Activated CD4-positive, alpha-beta T cell treated with anti-CD3 and anti-CD28 coated beads for 36 hours (primary cell): ENCODE measurements at regions of chr3 and their contacts with region 1.

Region 1: DNA sequence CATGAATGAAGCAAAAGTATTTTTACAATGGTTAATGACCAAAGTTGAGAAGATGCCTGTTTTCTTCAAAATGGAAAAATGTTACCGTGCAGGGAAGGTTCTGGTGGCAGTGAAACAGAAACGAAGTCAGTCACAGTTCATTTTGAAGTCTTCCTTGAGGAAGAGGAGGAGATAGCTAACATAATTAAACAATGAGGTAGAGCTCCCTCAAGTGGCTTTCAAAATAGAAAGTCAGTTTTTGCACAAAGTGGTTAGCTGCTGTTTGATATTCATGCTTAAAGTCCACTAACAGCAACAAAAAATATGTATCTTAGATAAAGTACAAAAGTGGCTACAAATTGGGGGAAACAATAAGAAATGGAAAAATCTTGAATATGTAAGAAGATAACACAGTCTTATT is 87.3 kb downstream of the TFG start:
- DNase-seq: no peak
- ATAC-seq: peak; percentile 44
- H3K4me3 Mint-ChIP-seq: no peak overlapping the region
- H3K27ac Mint-ChIP-seq: no peak overlapping the region
- H3K4me1 Mint-ChIP-seq: peaks cover 5% of the 10 kb centered on the region
- H3K27me3 Mint-ChIP-seq: no peaks in the 10 kb centered on the region

Region 2: GRCh38 chr3:100316641-100317069 is 479.9 kb before region 1 on chr3:
- CTCF ChIA-PET with region 1: interaction called, 3 read pairs
- POLR2A ChIA-PET with region 1: no interaction called
- intact Hi-C with region 1: loop called in 1 of 2 experiments (anchors 2 kb)
- DNase-seq: peak; percentile 42
- ATAC-seq: peak; percentile 75
- H3K4me3 Mint-ChIP-seq: no peak overlapping the region
- H3K27ac Mint-ChIP-seq: no peak overlapping the region
- H3K4me1 Mint-ChIP-seq: peaks cover 9% of the 10 kb centered on the region
- H3K27me3 Mint-ChIP-seq: no peaks in the 10 kb centered on the region

Region 3: GRCh38 chr3:100463002-100463401 is 333.6 kb before region 1 on chr3:
- CTCF ChIA-PET with region 1: interaction called, 6 read pairs
- POLR2A ChIA-PET with region 1: no interaction called
- intact Hi-C with region 1: loop called (anchors 2 to 5 kb)
- DNase-seq: peak; percentile 22
- ATAC-seq: peak; percentile 94
- H3K4me3 Mint-ChIP-seq: no peak overlapping the region
- H3K27ac Mint-ChIP-seq: no peak overlapping the region
- H3K4me1 Mint-ChIP-seq: no peaks in the 10 kb centered on the region
- H3K27me3 Mint-ChIP-seq: peaks cover 2% of the 10 kb centered on the region

Region 4: DNA sequence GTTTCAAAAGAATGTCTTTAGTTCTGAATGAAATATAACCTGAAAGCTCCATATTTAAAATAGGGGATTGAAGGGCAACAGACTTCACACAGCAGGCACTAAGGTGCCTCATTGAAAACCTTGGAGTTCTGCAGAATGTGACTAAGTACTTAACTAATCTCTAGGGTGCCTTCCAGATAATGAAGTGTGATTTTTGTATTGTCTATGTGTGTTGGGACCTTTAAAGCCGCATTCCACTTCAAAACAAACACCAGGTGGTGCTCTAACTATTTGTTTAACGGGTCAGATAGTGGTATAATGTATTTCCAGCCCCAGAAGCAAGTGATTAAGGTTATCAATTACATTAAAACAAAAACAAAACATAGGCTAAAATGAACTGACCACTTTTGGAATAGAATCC is 59.2 kb before region 1 on chr3:
- CTCF ChIA-PET with region 1: no interaction called
- POLR2A ChIA-PET with region 1: no interaction called
- intact Hi-C with region 1: loop called in 1 of 2 experiments (anchors 2 kb)
- DNase-seq: no peak
- ATAC-seq: no peak
- H3K4me3 Mint-ChIP-seq: no peak overlapping the region
- H3K27ac Mint-ChIP-seq: no peak overlapping the region
- H3K4me1 Mint-ChIP-seq: peaks cover 8% of the 10 kb centered on the region
- H3K27me3 Mint-ChIP-seq: no peaks in the 10 kb centered on the region

Region 5: GRCh38 chr3:100761211-100761942 is 35.2 kb before region 1 on chr3:
- CTCF ChIA-PET with region 1: no interaction called
- POLR2A ChIA-PET with region 1: no interaction called
- intact Hi-C with region 1: no loop called
- DNase-seq: peak; percentile 48
- ATAC-seq: peak; percentile 78
- H3K4me3 Mint-ChIP-seq: no peak overlapping the region
- H3K27ac Mint-ChIP-seq: no peak overlapping the region
- H3K4me1 Mint-ChIP-seq: peaks cover 14% of the 10 kb centered on the region
- H3K27me3 Mint-ChIP-seq: peaks cover 2% of the 10 kb centered on the region

Region 6: DNA sequence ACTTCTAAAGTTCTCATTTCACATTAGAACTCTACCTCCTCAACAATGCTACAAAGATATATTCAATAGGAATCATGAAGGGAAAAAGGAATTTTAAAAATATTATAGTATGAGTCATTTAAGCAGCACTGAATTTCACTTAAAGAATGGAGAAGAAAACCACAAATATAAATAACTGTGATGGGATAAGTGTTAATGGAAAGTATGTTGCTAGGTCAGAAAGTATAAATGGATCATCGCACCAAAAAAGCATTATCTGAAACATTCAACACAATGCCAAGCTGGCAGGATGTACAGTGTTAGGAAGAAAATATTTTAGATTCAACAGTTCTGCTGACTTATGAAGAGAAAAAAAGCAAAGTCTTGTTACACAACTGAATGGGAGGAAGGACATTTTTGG is 14.1 kb after region 1 on chr3:
- CTCF ChIA-PET with region 1: interaction called, 11 read pairs
- POLR2A ChIA-PET with region 1: no interaction called
- intact Hi-C with region 1: no loop called
- DNase-seq: no peak
- ATAC-seq: no peak
- H3K4me3 Mint-ChIP-seq: no peak overlapping the region
- H3K27ac Mint-ChIP-seq: no peak overlapping the region
- H3K4me1 Mint-ChIP-seq: peaks cover 8% of the 10 kb centered on the region
- H3K27me3 Mint-ChIP-seq: peaks cover 18% of the 10 kb centered on the region

Region 7: DNA sequence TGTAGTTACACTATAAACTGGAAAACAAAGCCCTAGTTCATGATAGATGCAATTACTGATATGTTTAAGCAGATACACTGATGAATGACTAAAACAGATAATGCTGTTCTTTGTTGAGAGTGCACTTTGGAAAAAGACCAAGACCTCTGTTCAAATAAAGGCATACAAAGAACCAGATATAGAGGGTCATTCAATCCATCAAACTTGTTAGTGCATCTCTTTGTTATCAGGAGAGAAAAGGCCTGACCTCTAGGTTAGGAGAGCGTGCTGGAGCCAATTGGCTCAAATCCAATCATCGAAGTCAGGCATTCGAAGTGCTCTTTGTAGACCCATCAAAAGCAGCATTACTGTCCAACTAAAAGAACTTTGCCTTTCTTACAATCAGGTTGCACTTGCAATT is 36.9 kb after region 1 on chr3:
- CTCF ChIA-PET with region 1: no interaction called
- POLR2A ChIA-PET with region 1: no interaction called
- intact Hi-C with region 1: no loop called
- DNase-seq: no peak
- ATAC-seq: no peak
- H3K4me3 Mint-ChIP-seq: no peak overlapping the region
- H3K27ac Mint-ChIP-seq: no peak overlapping the region
- H3K4me1 Mint-ChIP-seq: no peaks in the 10 kb centered on the region
- H3K27me3 Mint-ChIP-seq: peaks cover 25% of the 10 kb centered on the region

Region 8: GRCh38 chr3:100968932-100969906 is 172.7 kb after region 1 on chr3:
- CTCF ChIA-PET with region 1: no interaction called
- POLR2A ChIA-PET with region 1: no interaction called
- intact Hi-C with region 1: no loop called
- DNase-seq: no peak
- ATAC-seq: no peak
- H3K4me3 Mint-ChIP-seq: no peak overlapping the region
- H3K27ac Mint-ChIP-seq: no peak overlapping the region
- H3K4me1 Mint-ChIP-seq: no peaks in the 10 kb centered on the region
- H3K27me3 Mint-ChIP-seq: peaks cover 6% of the 10 kb centered on the region